MCF 10A (cell line): ENCODE measurements at regions of chr2 and their contacts with region 1.

Region 1: GRCh38 chr2:215828517-215829184 is 184.7 kb downstream of the MREG start:
- DNase-seq: peak; percentile 83
- H3K4me3 Mint-ChIP-seq: no peak overlapping the region
- H3K27ac Mint-ChIP-seq: peak overlapping the region; percentile 24
- H3K4me1 Mint-ChIP-seq: peaks cover 22% of the 10 kb centered on the region
- H3K27me3 Mint-ChIP-seq: no peaks in the 10 kb centered on the region
- CTCF ChIP-seq: peak; percentile 58

Region 2: DNA sequence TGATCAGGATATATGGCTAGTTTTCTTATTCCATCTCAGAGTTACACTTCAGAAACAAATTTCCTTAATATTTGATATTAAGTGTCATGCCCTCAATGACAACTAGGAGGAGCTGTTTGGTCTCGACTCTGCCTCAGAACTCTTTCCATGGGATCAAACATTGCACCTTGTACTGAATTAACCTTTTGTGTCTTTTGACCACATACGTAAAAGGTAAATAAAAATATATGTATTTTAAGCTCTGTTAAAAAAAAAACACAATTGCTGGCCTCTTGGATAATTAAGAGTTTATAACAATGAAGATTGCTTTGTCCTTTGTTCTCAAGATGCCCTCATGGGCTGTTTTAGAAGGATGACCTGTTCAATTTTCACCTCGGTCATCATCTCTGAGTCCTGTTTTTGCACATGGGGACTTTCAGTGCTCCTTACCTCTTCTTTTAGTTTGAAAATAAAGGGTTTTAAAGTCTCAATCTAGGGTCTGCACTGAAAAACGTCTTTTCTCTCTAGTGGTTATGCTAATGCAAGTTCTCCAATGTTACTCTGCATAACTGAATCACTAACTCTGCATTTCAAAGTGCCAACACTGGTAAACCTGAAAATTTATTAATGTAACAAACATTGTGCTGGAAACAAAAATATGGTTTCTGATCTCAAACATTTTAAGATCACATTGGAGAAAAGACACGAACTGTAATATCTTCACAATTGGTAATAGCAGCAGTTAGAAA is 374.0 kb before region 1 on chr2:
- CTCF ChIA-PET with region 1: interaction called, 10 read pairs
- POLR2A ChIA-PET with region 1: interaction called, 3 read pairs
- intact Hi-C with region 1: loop called (anchors 1 kb)
- DNase-seq: peak; percentile 52
- H3K4me3 Mint-ChIP-seq: no peak overlapping the region
- H3K27ac Mint-ChIP-seq: peak overlapping the region; percentile 49
- H3K4me1 Mint-ChIP-seq: peaks cover 8% of the 10 kb centered on the region
- H3K27me3 Mint-ChIP-seq: no peaks in the 10 kb centered on the region
- CTCF ChIP-seq: peak; percentile 66

Region 3: DNA sequence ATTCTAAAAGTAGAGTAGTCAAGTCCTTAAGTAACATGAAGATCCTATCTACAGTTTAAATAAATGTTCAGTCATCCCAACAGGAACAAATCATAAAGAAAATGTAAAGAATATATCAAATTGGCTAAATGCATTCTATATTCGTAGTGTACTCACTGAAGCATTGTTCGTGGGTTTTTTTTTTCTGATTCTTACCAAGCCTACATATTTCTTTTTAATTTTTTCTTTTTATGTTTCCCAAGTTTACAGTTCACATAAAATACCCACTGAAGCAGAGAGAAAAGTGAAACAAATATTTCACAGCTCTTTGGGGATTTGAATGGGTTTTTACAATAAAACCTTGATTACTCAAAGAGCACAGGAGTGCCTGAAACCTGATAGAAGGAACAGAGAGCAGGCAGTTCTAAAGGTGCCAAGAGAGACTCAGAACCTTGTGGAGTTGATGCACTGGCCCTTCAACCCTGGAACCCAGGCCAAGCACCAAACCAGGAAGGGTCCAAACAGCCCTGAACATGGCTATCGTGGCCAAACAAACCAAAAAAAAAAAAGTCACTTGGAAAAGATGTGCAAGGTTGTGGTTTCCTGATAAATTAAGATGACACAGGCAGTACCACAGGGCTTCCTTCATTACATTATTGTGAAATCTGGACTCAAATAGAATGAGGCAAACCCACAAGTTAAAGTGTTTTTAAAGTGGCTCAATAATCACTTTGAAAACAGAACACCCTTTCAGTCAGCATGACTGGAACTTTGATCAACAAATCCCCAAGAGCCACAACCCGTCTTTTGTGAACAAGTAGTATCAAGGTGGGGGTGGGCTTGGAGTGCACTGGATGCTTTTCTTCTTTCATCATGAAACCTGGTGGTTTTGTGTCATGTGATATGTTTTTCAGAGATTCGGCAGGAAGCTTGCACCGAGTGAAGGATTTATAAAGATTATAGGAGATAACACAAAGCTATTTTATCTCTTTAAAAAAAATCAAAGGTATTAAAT is 147.7 kb before region 1 on chr2:
- CTCF ChIA-PET with region 1: no interaction called
- POLR2A ChIA-PET with region 1: interaction called, 3 read pairs
- intact Hi-C with region 1: loop called (anchors 10 kb)
- DNase-seq: peak; percentile 74
- H3K4me3 Mint-ChIP-seq: no peak overlapping the region
- H3K27ac Mint-ChIP-seq: peak overlapping the region; percentile 70
- H3K4me1 Mint-ChIP-seq: peaks cover 43% of the 10 kb centered on the region
- H3K27me3 Mint-ChIP-seq: no peaks in the 10 kb centered on the region
- CTCF ChIP-seq: no peak

Region 4: DNA sequence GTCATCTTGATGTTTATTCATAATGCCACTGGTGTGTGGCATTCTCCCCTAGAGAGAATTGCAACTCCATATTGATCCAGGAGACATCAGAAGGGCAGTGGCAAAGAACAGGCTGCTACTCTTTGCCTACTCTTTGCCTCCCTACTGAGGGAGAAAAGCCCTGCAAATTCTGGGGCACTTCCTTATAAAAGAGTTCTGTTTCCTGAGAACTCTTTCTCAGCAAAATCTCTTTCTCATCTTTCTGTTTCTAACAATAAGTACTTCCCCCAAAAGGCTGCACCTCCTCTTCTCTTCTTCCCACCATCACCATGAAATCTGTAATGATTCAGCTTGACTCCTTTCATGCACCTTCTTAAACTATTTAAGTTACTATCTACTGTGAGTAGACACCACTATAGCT is 85.6 kb before region 1 on chr2:
- CTCF ChIA-PET with region 1: no interaction called
- POLR2A ChIA-PET with region 1: no interaction called
- intact Hi-C with region 1: no loop called
- DNase-seq: no peak
- H3K4me3 Mint-ChIP-seq: no peak overlapping the region
- H3K27ac Mint-ChIP-seq: no peak overlapping the region
- H3K4me1 Mint-ChIP-seq: no peaks in the 10 kb centered on the region
- H3K27me3 Mint-ChIP-seq: no peaks in the 10 kb centered on the region
- CTCF ChIP-seq: no peak

Region 5: DNA sequence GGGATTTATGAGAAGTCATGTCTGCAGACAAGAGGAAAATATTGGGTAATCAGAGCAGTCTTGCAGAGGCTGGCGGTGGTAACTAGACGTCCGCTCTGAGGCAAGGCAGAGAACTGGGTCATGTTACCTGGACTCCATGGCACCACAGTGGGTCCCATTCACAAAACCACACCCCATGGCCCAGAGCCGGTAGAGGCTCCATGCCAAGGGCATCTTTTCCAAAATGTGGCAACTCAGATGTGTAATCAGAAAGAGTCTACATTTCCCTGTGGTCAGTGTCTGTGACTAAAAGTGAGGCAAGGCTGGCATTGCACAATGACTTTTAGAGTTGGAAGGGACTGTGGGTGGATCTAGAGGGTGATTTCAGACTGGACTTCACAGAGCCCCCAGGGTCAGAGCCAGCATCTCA is 71.6 kb after region 1 on chr2:
- CTCF ChIA-PET with region 1: interaction called, 3 read pairs
- POLR2A ChIA-PET with region 1: interaction called, 4 read pairs
- intact Hi-C with region 1: loop called (anchors 5 kb)
- DNase-seq: peak; percentile 100
- H3K4me3 Mint-ChIP-seq: no peak overlapping the region
- H3K27ac Mint-ChIP-seq: peak overlapping the region; percentile 41
- H3K4me1 Mint-ChIP-seq: peaks cover 51% of the 10 kb centered on the region
- H3K27me3 Mint-ChIP-seq: no peaks in the 10 kb centered on the region
- CTCF ChIP-seq: no peak